Left colon (tissue), 2 donors: ENCODE measurements at regions of chr18 and their contacts with region 1.

Region 1: DNA sequence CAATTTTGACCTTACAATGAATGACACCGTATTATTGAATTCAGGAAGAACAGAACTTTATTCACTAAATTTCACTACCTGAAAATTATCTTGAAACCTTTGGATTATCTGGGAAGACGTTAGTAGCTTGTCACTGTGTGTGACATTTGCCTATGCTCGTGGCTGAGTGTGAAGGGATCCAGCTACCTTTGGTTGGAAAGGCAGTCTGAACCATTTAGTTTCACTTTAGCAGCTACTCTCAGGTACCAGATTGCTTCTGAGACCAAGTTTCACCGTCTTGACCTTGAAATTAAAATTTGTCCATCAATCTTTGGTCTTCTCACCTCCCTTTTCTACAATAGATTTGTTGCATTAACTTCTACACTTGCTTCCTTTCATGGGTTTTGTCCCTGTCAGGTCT is 637.5 kb downstream of the MBD2 start:
- DNase-seq: no peak
- ATAC-seq: no peak

Region 2: DNA sequence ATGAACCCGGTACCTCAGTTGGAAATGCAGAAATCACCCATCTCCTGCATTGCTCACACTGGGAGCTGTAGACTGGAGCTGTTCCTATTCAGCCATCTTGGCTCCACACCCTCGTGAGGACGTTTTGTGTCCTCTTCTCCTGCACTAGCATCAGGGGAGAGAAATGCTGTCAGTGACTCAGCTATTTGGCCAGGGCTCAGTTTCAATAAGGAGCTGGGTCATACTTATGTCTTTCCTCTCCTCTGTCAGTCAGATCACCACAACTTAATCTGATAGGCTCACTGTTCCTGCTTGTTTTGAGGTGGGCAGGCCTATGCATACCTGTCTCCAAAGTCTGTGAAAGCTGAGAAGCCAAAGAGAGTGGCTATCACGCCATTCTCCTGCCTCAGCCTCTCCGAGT is 325.7 kb before region 1 on chr18:
- intact Hi-C with region 1: no loop called
- DNase-seq: no peak
- ATAC-seq: no peak

Region 3: GRCh38 chr18:53644799-53645471 is 58.0 kb after region 1 on chr18:
- intact Hi-C with region 1: loop called in 1 of 2 experiments (anchors 10 kb)
- DNase-seq: no peak
- ATAC-seq: no peak